IMR-90 (cell line): ENCODE measurements at regions of chr3 and their contacts with region 1.

Region 1: GRCh38 chr3:57100046-57100695 is 39.7 kb downstream of the SPATA12 start:
- DNase-seq: peak; percentile 75
- ATAC-seq: peak; percentile 97
- H3K4me3 ChIP-seq: no peak overlapping the region
- H3K27ac ChIP-seq: no peak overlapping the region
- H3K4me1 ChIP-seq: peaks cover 3% of the 10 kb centered on the region; the same call in 1 of the 2 replicates
- H3K27me3 ChIP-seq: no peaks in the 10 kb centered on the region
- CTCF ChIP-seq: peak; percentile 93
- POLR2A ChIP-seq: no peak
- RAD21 ChIP-seq: peak; percentile 91

Region 2: DNA sequence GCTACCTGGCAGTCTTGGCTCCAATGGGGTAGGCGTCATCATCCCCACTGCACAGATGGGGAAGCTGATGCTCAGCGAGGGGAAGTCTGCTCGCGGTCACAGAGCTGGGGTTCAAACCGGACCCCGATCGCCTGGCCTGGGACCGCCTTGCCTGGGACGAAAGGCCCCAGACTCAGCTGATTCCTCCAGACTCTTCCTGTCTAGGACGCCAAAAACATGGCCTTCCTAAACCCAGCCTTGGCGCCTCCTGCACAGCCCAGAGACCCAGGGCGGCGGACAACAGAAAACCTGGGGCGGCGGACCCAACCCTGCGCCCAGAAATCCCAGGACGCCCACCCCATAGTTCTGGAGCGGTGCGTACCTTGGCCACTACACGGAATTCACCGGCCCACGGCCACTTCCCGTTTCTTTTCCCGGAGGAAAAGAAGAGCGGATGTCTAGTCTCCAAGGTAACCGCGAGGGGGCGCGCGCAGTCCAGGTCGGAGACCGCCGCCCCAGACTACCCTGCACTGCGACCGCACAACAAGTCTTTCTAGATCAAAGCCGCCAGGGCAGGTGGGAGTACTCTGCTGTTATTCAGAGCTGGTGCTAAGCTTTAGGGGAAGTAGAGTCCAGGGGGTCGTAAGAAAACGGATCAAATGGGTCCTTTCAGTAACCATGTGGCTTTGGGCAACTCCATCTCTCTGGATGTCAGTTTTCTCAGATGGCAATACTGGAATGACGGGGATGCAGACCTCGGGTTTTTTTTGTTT is 69.9 kb after region 1 on chr3:
- CTCF ChIA-PET with region 1: no interaction called
- POLR2A ChIA-PET with region 1: no interaction called
- dilution Hi-C with region 1: no loop called
- in situ Hi-C with region 1: no loop called
- intact Hi-C with region 1: loop called (anchors 2 kb)
- DNase-seq: peak; percentile 52
- ATAC-seq: peak; percentile 85
- H3K4me3 ChIP-seq: peak overlapping the region; percentile 43
- H3K27ac ChIP-seq: no peak overlapping the region
- H3K4me1 ChIP-seq: peaks cover 3% of the 10 kb centered on the region; the same call in 1 of the 2 replicates
- H3K27me3 ChIP-seq: peaks cover 20% of the 10 kb centered on the region
- CTCF ChIP-seq: peak; percentile 77
- POLR2A ChIP-seq: no peak
- RAD21 ChIP-seq: peak; percentile 76

Region 3: GRCh38 chr3:57199895-57200297 is 99.7 kb after region 1 on chr3 and contains the start of gene HESX1:
- CTCF ChIA-PET with region 1: no interaction called
- POLR2A ChIA-PET with region 1: no interaction called
- dilution Hi-C with region 1: no loop called
- in situ Hi-C with region 1: no loop called
- intact Hi-C with region 1: no loop called
- DNase-seq: no peak
- ATAC-seq: no peak
- H3K4me3 ChIP-seq: no peak within 1 kb of the TSS
- H3K27ac ChIP-seq: no peak within 1 kb of the TSS
- H3K4me1 ChIP-seq: no peaks in the 10 kb centered on the region
- H3K27me3 ChIP-seq: peaks cover 1% of the 10 kb centered on the region
- CTCF ChIP-seq: no peak
- POLR2A ChIP-seq: no peak
- RAD21 ChIP-seq: no peak
- total RNA-seq, gene HESX1: 0.36 TPM in 1 of 2 replicates, not detected in the other

Region 4: DNA sequence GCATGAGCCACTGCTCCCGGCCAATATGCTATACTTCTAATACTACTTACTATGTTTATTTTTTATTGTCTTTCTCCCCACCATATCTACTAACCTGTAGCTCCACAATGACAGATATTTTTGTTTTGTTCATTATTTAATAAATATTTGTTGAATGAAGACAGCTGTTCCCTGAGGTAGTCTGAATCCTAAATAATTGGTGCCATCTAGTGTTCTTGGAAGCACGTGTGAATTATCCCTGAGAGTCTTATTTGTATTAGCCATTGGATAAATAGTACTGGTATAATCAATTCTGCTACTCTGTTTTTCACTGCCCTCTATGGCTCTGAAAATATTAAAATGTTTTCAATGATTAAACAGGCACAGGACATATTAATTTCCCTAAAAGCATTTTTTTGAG is 121.7 kb after region 1 on chr3:
- CTCF ChIA-PET with region 1: interaction called, 3 read pairs
- POLR2A ChIA-PET with region 1: no interaction called
- dilution Hi-C with region 1: no loop called
- in situ Hi-C with region 1: no loop called
- intact Hi-C with region 1: loop called (anchors 1 kb)
- DNase-seq: peak; percentile 28
- ATAC-seq: peak; percentile 60; the same call in 1 of the 2 replicates
- H3K4me3 ChIP-seq: no peak overlapping the region
- H3K27ac ChIP-seq: no peak overlapping the region
- H3K4me1 ChIP-seq: no peaks in the 10 kb centered on the region; the same call in 1 of the 2 replicates
- H3K27me3 ChIP-seq: no peaks in the 10 kb centered on the region; the same call in 1 of the 2 replicates
- CTCF ChIP-seq: peak; percentile 57
- POLR2A ChIP-seq: no peak
- RAD21 ChIP-seq: peak; percentile 51

Region 5: GRCh38 chr3:57434041-57434440 is 333.9 kb after region 1 on chr3:
- CTCF ChIA-PET with region 1: no interaction called
- POLR2A ChIA-PET with region 1: no interaction called
- dilution Hi-C with region 1: no loop called
- in situ Hi-C with region 1: no loop called
- intact Hi-C with region 1: loop called (anchors 5 kb)
- DNase-seq: peak; percentile 28
- ATAC-seq: no peak
- H3K4me3 ChIP-seq: no peak overlapping the region
- H3K27ac ChIP-seq: no peak overlapping the region
- H3K4me1 ChIP-seq: no peaks in the 10 kb centered on the region
- H3K27me3 ChIP-seq: no peaks in the 10 kb centered on the region; the same call in 1 of the 2 replicates
- CTCF ChIP-seq: peak; percentile 42; the same call in 1 of the 2 replicates
- POLR2A ChIP-seq: no peak
- RAD21 ChIP-seq: peak; percentile 34; the same call in 1 of the 2 replicates

Region 6: GRCh38 chr3:57555738-57556458 is 455.7 kb after region 1 on chr3 and contains the start of gene PDE12:
- CTCF ChIA-PET with region 1: no interaction called
- POLR2A ChIA-PET with region 1: no interaction called
- dilution Hi-C with region 1: no loop called
- in situ Hi-C with region 1: no loop called
- intact Hi-C with region 1: loop called (anchors 2 kb)
- DNase-seq: peak; percentile 91
- ATAC-seq: peak; percentile 85
- H3K4me3 ChIP-seq: peak within 1 kb of the TSS; percentile 79
- H3K27ac ChIP-seq: peak within 1 kb of the TSS; percentile 73
- H3K4me1 ChIP-seq: peaks cover 1% of the 10 kb centered on the region; the same call in 1 of the 2 replicates
- H3K27me3 ChIP-seq: no peaks in the 10 kb centered on the region
- CTCF ChIP-seq: no peak
- POLR2A ChIP-seq: peak; percentile 95
- RAD21 ChIP-seq: 0 out of 2 replicates have a peak, but pooled peaks have one; percentile 13
- total RNA-seq, gene PDE12: 16.8 and 16.9 TPM in 2 replicates